Naive thymus-derived CD8-positive, alpha-beta T cell (primary cell): ENCODE measurements at regions of chr1 and their contacts with region 1.

Region 1: DNA sequence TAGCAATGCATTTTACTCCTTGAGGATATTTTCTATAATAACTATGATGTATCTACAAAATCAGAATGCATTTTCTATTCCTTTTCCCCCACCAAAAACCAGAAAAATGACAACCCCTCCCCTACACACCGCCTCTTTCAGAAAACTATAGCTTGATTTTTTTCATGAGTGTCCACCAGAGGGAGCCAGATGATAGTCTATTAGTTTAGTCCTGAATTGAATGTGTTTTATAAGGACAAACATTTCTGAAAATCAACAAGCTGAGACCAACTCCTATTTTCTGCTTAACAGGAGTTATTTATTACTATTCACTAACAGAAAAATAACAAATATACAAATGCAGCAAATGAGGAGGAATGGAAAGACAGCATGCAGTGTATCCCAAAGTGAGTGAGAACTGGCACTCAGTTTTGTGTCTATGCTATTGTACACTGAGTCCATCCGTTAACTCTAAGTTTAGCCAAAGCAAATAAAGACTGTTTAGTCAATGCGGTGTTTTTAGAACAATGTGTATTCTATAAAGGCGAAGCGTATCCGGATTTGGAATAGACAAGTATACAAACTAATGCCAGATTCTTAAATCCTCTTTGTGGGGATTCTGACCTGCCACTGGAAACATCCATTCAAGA is 182.6 kb downstream of the VAV3 start:
- DNase-seq: peak in 8 of 10 donors; percentile 31 to 83 (median 62)
- ATAC-seq: no peak
- H3K4me3 Mint-ChIP-seq: no peak overlapping the region
- H3K27ac Mint-ChIP-seq: no peak overlapping the region
- H3K4me1 Mint-ChIP-seq: peaks cover 9 to 47% (median 34%) of the 10 kb centered on the region in 4 donors
- H3K27me3 Mint-ChIP-seq: no peaks in the 10 kb centered on the region

Region 2: GRCh38 chr1:107246775-107247345 is 535.5 kb before region 1 on chr1:
- POLR2A ChIA-PET with region 1: no interaction called
- DNase-seq: no peak
- ATAC-seq: no peak
- H3K4me3 Mint-ChIP-seq: no peak overlapping the region
- H3K27ac Mint-ChIP-seq: no peak overlapping the region
- H3K4me1 Mint-ChIP-seq: peaks cover 0 to 5% (median 2%) of the 10 kb centered on the region in 4 donors
- H3K27me3 Mint-ChIP-seq: peaks cover 0 to 9% (median 3%) of the 10 kb centered on the region in 5 donors

Region 3: DNA sequence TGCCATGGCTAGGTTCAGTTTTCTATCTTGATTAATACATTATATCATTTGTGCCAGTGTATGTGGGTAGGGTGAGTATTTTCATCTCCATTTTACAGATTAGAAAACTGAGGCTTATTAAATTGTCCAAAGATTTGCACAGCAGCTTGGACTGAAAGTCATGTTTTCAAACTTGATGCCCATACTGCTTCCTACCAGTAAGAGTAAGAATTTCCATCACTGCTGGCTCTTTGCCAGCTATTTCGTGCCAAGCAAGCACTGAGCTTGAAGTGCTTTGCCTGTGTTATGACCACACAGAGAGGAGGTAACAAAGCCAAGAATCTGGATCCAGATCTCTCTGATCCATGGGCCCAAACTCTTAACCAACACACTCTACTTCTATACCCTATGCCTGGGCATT is 112.3 kb before region 1 on chr1:
- POLR2A ChIA-PET with region 1: no interaction called
- DNase-seq: no peak
- ATAC-seq: no peak
- H3K4me3 Mint-ChIP-seq: no peak overlapping the region
- H3K27ac Mint-ChIP-seq: no peak overlapping the region
- H3K4me1 Mint-ChIP-seq: no peaks in the 10 kb centered on the region
- H3K27me3 Mint-ChIP-seq: no peaks in the 10 kb centered on the region

Region 4: GRCh38 chr1:108125312-108126138 is 343.2 kb after region 1 on chr1:
- POLR2A ChIA-PET with region 1: interaction called, 18 read pairs
- DNase-seq: peak; percentile 20 to 85 (median 66)
- ATAC-seq: peak; percentile 89 to 97
- H3K4me3 Mint-ChIP-seq: no peak overlapping the region
- H3K27ac Mint-ChIP-seq: peak overlapping the region in 4 of 10 donors; percentile 1 to 53 (median 28)
- H3K4me1 Mint-ChIP-seq: peaks cover 0 to 9% (median 3%) of the 10 kb centered on the region in 4 donors
- H3K27me3 Mint-ChIP-seq: no peaks in the 10 kb centered on the region